Activated CD4-positive, alpha-beta memory T cell treated with anti-CD3 and anti-CD28 coated beads, Interleukin-2, amount 10 ng/mL, durations not matched to agents 7 days and 5 days (primary cell): ENCODE measurements at regions of chr5 and their contacts with region 1.

Region 1: DNA sequence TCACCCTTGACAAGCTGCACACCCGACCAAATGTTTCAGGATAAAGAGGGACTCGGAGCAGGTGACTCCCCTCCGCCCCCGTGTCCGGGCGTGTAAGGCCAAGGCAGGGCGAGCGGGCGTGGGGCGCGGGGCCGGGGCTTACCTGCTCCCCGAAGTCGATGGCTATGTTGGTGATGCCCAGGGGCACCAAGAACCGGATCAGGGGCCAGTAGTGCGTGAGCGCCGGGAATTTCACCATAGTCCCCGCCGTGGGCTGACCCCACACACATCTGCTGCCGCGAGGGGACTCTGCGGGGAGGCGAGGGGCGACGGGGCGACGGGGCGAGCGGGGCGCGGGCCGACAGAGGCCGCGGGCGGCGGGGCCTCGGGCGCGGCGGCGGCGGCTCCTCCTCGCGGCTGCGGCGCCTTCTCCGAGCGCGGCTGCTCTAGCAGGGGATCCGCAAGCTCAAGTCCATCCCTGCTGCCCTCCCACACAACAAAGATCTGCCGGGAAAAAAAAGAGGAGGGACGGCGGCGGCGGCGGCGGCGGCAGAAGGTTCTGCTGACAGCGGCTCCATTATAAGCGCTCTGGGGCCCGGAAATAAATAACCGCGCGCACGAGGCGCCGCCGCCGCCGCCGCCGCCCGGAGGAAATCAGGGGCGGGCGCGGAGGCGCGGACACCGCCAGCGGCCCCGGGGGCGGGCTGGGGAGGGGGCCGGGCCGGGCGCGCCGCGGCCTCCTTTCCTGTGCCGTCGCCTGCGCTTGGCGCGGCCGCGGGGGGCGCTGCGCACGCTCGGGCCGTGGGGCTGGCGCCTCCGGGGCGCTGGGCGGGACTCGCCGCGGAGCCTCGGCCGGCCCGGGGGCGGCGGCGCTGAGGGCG is at the start of gene ANKH:
- DNase-seq: peak; percentile 86
- H3K4me3 Mint-ChIP-seq: peak within 1 kb of the TSS; percentile 89
- H3K27ac Mint-ChIP-seq: peak within 1 kb of the TSS; percentile 80
- H3K4me1 Mint-ChIP-seq: peaks cover 32% of the 10 kb centered on the region
- H3K27me3 Mint-ChIP-seq: peaks cover 4% of the 10 kb centered on the region
- total RNA-seq, gene ANKH: 83.7 to 87.0 TPM

Region 2: DNA sequence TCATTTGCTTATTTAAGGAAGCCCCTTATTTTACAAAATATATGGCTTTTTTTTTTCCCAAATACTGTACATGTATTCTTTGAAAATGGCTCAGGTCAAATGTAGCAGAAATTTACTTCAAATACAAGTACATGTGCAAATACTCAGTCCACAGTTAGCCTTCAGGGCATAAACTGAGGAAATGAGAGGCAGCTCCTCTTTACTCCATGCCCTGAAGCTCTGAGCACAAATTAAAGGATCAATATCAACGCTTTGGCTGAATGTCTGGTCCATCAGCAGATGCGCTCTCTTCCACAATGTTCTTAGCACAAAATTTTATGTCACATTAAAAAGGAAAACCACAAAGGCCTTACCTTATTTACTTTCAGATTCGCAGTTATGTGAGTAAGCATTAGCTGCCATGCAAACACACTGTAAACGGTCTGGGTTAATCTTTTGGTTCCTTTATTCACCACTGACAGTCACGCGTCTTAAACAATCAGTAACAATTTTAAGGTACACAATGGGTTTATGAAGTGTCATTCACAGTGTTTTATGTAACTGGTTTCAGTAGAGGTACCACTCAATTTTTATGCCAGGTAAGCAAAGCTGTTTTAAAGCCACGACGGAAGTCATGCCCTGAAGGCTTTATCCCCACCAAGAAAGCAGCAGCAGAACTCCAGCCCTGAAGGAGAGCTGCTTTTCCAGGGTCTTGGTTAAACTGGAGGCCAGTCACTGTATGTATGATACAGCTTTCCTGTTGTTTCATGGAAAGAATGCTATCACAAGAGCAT is 103.5 kb before region 1 on chr5:
- CTCF ChIA-PET with region 1: interaction called, 10 read pairs
- POLR2A ChIA-PET with region 1: no interaction called
- DNase-seq: no peak
- H3K4me3 Mint-ChIP-seq: no peak overlapping the region
- H3K27ac Mint-ChIP-seq: peak overlapping the region; percentile 16
- H3K4me1 Mint-ChIP-seq: peaks cover 25% of the 10 kb centered on the region
- H3K27me3 Mint-ChIP-seq: no peaks in the 10 kb centered on the region

Region 3: GRCh38 chr5:14809369-14810155 is 61.9 kb before region 1 on chr5:
- CTCF ChIA-PET with region 1: interaction called, 6 read pairs
- POLR2A ChIA-PET with region 1: interaction called, 18 read pairs
- DNase-seq: peak; percentile 87
- H3K4me3 Mint-ChIP-seq: peak overlapping the region; percentile 71
- H3K27ac Mint-ChIP-seq: peak overlapping the region; percentile 85
- H3K4me1 Mint-ChIP-seq: peaks cover 52% of the 10 kb centered on the region
- H3K27me3 Mint-ChIP-seq: no peaks in the 10 kb centered on the region

Region 4: GRCh38 chr5:14925326-14925725 is 53.9 kb after region 1 on chr5:
- CTCF ChIA-PET with region 1: no interaction called
- POLR2A ChIA-PET with region 1: interaction called, 16 read pairs
- DNase-seq: no peak
- H3K4me3 Mint-ChIP-seq: peak overlapping the region; percentile 49
- H3K27ac Mint-ChIP-seq: peak overlapping the region; percentile 88
- H3K4me1 Mint-ChIP-seq: peaks cover 44% of the 10 kb centered on the region
- H3K27me3 Mint-ChIP-seq: no peaks in the 10 kb centered on the region

Region 5: DNA sequence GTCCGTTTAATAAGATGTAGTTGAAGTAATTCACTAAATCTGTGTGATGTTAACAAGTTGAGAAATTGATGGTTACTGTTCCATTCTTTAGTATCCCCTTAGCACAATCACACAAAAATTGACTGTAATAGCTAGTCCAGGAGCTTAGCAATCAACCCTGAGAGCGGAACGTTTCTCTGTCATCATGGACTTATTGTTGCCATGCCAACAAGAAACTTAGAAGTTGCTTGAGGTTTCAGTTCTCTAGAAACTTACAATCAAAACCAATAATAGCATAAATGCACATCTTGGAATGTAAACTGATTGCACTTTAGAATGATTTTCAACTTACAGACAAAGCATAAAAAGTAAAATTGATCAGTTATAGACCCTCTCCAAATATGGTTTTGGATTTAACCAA is 125.6 kb after region 1 on chr5:
- CTCF ChIA-PET with region 1: interaction called, 15 read pairs
- POLR2A ChIA-PET with region 1: interaction called, 16 read pairs
- DNase-seq: no peak
- H3K4me3 Mint-ChIP-seq: no peak overlapping the region
- H3K27ac Mint-ChIP-seq: no peak overlapping the region
- H3K4me1 Mint-ChIP-seq: peaks cover 40% of the 10 kb centered on the region
- H3K27me3 Mint-ChIP-seq: peaks cover 18% of the 10 kb centered on the region

Region 6: GRCh38 chr5:15003511-15003920 is 132.1 kb after region 1 on chr5:
- CTCF ChIA-PET with region 1: interaction called, 15 read pairs
- POLR2A ChIA-PET with region 1: interaction called, 3 read pairs
- DNase-seq: peak; percentile 64
- H3K4me3 Mint-ChIP-seq: no peak overlapping the region
- H3K27ac Mint-ChIP-seq: no peak overlapping the region
- H3K4me1 Mint-ChIP-seq: peaks cover 19% of the 10 kb centered on the region
- H3K27me3 Mint-ChIP-seq: peaks cover 30% of the 10 kb centered on the region

Region 7: DNA sequence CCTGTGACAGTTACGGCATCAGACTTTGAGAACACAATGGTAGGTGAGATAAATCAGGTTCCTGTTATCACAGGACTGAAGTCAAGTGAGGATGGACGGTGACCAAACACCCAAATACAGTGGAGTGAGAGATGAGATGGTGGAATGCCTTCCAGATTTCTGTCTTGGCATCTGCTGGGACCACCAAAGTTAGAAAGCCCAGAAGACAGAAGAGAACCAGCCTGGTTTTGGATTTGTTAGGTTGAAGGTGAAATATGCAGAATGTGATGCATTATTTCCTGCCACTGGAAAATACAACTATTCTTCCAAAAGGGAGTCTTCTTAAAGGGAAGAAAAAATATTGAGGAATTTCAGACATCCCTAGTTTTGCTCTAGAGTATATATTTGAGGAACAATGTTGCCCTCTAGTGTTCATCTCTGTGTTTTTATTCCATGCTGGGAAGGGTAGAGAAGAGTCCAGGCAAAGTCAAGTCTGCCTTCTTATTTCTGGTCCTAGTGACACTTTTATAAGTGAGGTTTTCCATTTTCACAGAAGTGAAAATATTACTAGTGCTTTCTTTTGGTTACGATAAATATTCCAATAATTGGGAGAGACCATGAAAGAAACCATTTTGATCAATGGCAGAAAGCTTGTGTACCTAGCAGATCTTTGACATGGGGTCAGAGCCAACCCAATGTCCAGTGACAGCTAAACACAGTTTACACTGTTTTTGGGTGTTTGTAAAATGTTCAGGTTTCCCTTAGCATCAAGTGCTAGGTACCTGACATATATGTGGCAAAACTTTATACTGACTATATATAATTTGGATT is 142.4 kb after region 1 on chr5:
- CTCF ChIA-PET with region 1: no interaction called
- POLR2A ChIA-PET with region 1: no interaction called
- DNase-seq: no peak
- H3K4me3 Mint-ChIP-seq: no peak overlapping the region
- H3K27ac Mint-ChIP-seq: no peak overlapping the region
- H3K4me1 Mint-ChIP-seq: no peaks in the 10 kb centered on the region
- H3K27me3 Mint-ChIP-seq: peaks cover 2% of the 10 kb centered on the region

Region 8: DNA sequence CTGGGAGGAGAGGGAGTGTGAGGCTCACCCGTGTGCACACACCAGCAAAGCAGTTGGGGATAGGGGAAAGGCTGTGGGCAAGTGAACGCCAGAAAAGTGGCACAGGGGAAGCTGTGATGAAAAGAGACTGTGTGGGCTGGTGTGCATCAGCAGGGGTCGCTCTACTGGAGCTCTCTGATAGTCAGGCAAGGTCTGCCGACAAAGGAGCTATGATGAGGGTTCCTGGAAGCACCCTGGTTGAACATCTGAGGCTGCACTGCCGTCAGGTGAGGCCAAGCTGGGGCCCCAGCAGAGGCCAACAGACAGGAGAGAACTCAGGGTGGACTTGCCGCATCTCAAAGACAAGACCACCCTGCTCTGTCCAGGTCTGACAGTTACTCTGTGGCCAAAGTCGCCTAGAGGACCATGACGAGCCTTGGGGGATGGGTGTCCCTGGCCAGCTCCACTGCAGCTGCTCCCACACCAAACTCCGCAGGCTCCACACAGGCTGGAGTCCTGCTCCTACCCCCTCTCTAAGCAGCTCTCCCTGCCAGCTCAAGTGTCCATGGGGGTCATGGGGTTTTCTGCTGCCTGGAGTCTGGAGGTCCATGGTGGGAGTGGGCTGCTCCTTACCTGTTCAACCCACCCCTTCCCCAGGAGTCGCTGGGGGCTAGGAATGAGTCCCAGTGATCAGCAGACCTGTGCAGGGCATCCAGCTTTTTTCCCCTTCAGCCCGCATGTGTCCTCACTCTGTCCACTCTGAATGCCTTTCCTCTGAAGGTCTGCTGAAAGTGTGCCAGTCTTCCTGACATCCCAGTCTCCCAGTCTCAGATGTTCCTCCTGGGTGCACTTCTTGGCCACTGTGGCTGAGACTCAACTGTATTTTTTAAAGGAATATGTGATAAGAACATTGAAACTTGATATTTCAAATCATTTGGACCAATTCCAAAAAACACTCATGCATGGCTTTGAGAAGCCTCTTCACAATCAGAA is 261.3 kb after region 1 on chr5:
- CTCF ChIA-PET with region 1: no interaction called
- POLR2A ChIA-PET with region 1: no interaction called
- DNase-seq: no peak
- H3K4me3 Mint-ChIP-seq: no peak overlapping the region
- H3K27ac Mint-ChIP-seq: no peak overlapping the region
- H3K4me1 Mint-ChIP-seq: no peaks in the 10 kb centered on the region
- H3K27me3 Mint-ChIP-seq: no peaks in the 10 kb centered on the region